Pancreas (tissue), 10 donors: ENCODE measurements at regions of chr17 and their contacts with region 1.

Region 1: GRCh38 chr17:58595326-58595725 is 80.9 kb upstream of the MTMR4 start:
- DNase-seq: no peak
- ATAC-seq: no peak
- H3K4me3 ChIP-seq: no peak overlapping the region
- H3K27ac ChIP-seq: no peak overlapping the region
- H3K4me1 ChIP-seq: no peaks in the 10 kb centered on the region
- H3K27me3 ChIP-seq: no peaks in the 10 kb centered on the region
- CTCF ChIP-seq: no peak

Region 2: GRCh38 chr17:58813712-58814111 is 218.4 kb after region 1 on chr17:
- intact Hi-C with region 1: loop called in 1 of 3 experiments (anchors 10 kb)
- DNase-seq: no peak
- ATAC-seq: no peak
- H3K4me3 ChIP-seq: no peak overlapping the region
- H3K27ac ChIP-seq: no peak overlapping the region
- H3K4me1 ChIP-seq: no peaks in the 10 kb centered on the region
- H3K27me3 ChIP-seq: no peaks in the 10 kb centered on the region
- CTCF ChIP-seq: no peak